Activated CD8-positive, alpha-beta memory T cell treated with anti-CD3 and anti-CD28 coated beads, Interleukin-2, amount 10 ng/mL, durations not matched to agents 7 days and 5 days (primary cell): ENCODE measurements at regions of chr15 and their contacts with region 1.

Region 1: GRCh38 chr15:90320061-90320884 is 31.8 kb upstream of the ZNF774 start:
- DNase-seq: peak; percentile 82
- ATAC-seq: peak; percentile 99
- H3K4me3 Mint-ChIP-seq: no peak overlapping the region
- H3K27ac Mint-ChIP-seq: peak overlapping the region; percentile 45
- H3K4me1 Mint-ChIP-seq: peaks cover 11% of the 10 kb centered on the region
- H3K27me3 Mint-ChIP-seq: no peaks in the 10 kb centered on the region

Region 2: GRCh38 chr15:90075420-90076289 is 244.6 kb before region 1 on chr15:
- CTCF ChIA-PET with region 1: no interaction called
- DNase-seq: no peak
- ATAC-seq: no peak
- H3K4me3 Mint-ChIP-seq: no peak overlapping the region
- H3K27ac Mint-ChIP-seq: peak overlapping the region; percentile 35
- H3K4me1 Mint-ChIP-seq: peaks cover 5% of the 10 kb centered on the region
- H3K27me3 Mint-ChIP-seq: no peaks in the 10 kb centered on the region

Region 3: DNA sequence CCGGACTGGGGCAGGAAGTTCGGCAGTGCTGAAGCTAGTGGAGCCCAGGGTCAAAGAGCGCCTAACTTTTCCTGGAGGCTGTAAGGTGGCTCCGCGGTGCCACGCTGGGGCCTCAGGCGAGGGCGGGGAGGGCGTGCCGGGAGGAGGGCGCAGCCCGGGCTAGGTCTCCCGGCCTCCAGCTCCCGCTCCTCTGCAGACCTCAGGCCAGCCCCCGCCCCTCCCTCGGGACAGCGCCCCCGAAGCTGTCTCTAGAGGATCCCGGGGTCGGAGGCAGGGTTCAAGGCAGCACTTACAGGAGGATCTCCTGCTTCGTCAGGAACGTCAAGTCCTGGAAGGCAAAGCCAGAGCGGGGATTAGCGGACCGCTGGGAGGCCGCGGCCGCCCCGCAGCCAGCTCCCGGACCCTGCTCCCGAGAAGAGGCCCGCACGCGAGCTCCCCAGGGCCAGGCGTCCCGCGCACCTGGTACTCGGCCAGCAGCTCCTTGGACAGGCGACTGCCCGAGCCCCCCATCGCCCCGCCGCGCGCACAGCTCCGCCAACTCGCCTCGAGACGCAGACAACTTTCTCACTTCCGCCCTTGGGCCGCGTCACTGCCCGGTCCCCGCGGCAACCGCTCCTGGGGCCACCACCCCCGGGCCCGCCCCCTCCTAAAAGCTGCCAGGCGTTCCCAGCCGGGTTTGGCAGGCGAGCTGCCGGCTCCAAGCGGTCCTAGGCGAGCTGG is 86.7 kb before region 1 on chr15 and contains the start of gene CIB1:
- CTCF ChIA-PET with region 1: no interaction called
- DNase-seq: peak; percentile 98
- ATAC-seq: peak; percentile 85
- H3K4me3 Mint-ChIP-seq: peak within 1 kb of the TSS; percentile 89
- H3K27ac Mint-ChIP-seq: peak within 1 kb of the TSS; percentile 94
- H3K4me1 Mint-ChIP-seq: peaks cover 57% of the 10 kb centered on the region
- H3K27me3 Mint-ChIP-seq: no peaks in the 10 kb centered on the region
- total RNA-seq, gene CIB1: 120 to 127 TPM

Region 4: GRCh38 chr15:90306560-90306959 is 13.7 kb before region 1 on chr15:
- CTCF ChIA-PET with region 1: interaction called, 65 read pairs
- DNase-seq: peak; percentile 74
- ATAC-seq: peak; percentile 96
- H3K4me3 Mint-ChIP-seq: peak overlapping the region; percentile 5
- H3K27ac Mint-ChIP-seq: peak overlapping the region; percentile 54
- H3K4me1 Mint-ChIP-seq: peaks cover 32% of the 10 kb centered on the region
- H3K27me3 Mint-ChIP-seq: peaks cover 9% of the 10 kb centered on the region

Region 5: GRCh38 chr15:90419738-90420406 is 99.6 kb after region 1 on chr15:
- CTCF ChIA-PET with region 1: interaction called, 10 read pairs
- DNase-seq: peak; percentile 65
- ATAC-seq: peak; percentile 96
- H3K4me3 Mint-ChIP-seq: peak overlapping the region; percentile 20
- H3K27ac Mint-ChIP-seq: peak overlapping the region; percentile 74
- H3K4me1 Mint-ChIP-seq: peaks cover 55% of the 10 kb centered on the region
- H3K27me3 Mint-ChIP-seq: no peaks in the 10 kb centered on the region

Region 6: GRCh38 chr15:90465140-90465922 is 145.1 kb after region 1 on chr15:
- CTCF ChIA-PET with region 1: interaction called, 11 read pairs
- DNase-seq: no peak
- ATAC-seq: no peak
- H3K4me3 Mint-ChIP-seq: no peak overlapping the region
- H3K27ac Mint-ChIP-seq: peak overlapping the region; percentile 18
- H3K4me1 Mint-ChIP-seq: peaks cover 25% of the 10 kb centered on the region
- H3K27me3 Mint-ChIP-seq: no peaks in the 10 kb centered on the region

Region 7: DNA sequence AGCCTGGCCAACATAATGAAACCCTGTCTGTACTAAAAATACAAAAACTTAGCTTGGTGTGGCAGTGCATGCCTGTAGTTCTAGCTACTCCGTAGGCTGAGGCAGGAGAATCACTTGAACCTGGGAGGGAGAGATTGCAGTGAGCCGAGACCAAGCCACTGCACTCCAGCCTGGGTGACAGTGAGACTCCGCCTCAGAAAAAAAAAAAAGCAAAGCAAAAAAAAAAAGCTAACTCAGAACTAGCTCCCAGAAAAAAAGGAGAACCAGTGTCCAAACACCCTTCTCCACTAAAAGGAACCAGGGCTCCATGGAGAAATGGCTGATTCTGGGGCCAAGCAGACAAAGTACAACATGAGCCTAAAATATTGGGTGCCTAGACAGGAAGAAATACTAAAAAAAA is 192.7 kb after region 1 on chr15:
- CTCF ChIA-PET with region 1: interaction called, 15 read pairs
- DNase-seq: no peak
- ATAC-seq: no peak
- H3K4me3 Mint-ChIP-seq: no peak overlapping the region
- H3K27ac Mint-ChIP-seq: no peak overlapping the region
- H3K4me1 Mint-ChIP-seq: peaks cover 8% of the 10 kb centered on the region
- H3K27me3 Mint-ChIP-seq: peaks cover 4% of the 10 kb centered on the region

Region 8: GRCh38 chr15:90603893-90604292 is 283.6 kb after region 1 on chr15:
- CTCF ChIA-PET with region 1: interaction called, 13 read pairs
- DNase-seq: peak; percentile 63
- ATAC-seq: no peak
- H3K4me3 Mint-ChIP-seq: no peak overlapping the region
- H3K27ac Mint-ChIP-seq: peak overlapping the region; percentile 58
- H3K4me1 Mint-ChIP-seq: peaks cover 13% of the 10 kb centered on the region
- H3K27me3 Mint-ChIP-seq: no peaks in the 10 kb centered on the region